ENCODE measurements at regions of chr12 and their contacts with region 1.

Region 1: DNA sequence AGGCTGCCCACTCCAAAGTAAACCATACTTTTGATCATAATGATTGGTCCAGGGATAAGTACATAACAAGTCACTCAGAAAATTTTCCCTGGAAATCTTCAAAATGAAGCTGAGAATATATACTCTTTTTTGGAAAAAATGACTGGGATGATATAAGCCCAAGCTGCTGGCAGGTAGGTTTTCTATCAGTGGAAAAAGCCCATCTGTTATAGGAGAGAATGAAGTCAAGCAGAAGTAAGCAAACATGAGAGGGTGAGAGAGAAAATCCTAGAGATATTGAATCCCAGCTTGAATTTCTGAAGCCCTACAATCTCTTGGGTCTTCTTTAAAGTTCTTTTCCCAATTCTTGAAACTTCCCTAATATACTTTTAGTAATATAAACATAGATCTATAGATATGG is 37.3 kb upstream of the ZDHHC17 start:
- DNase-seq: no peak
- ATAC-seq: no peak
- H3K4me3 Mint-ChIP-seq: no peak overlapping the region
- H3K27ac Mint-ChIP-seq: no peak overlapping the region
- H3K4me1 Mint-ChIP-seq: no peaks in the 10 kb centered on the region
- H3K27me3 Mint-ChIP-seq: no peaks in the 10 kb centered on the region

Region 2: GRCh38 chr12:76738934-76739586 is 12.4 kb after region 1 on chr12:
- CTCF ChIA-PET with region 1: no interaction called
- POLR2A ChIA-PET with region 1: no interaction called
- intact Hi-C with region 1: loop called in 1 of 2 experiments (anchors 1 kb)
- DNase-seq: no peak
- ATAC-seq: no peak
- H3K4me3 Mint-ChIP-seq: no peak overlapping the region
- H3K27ac Mint-ChIP-seq: no peak overlapping the region
- H3K4me1 Mint-ChIP-seq: no peaks in the 10 kb centered on the region
- H3K27me3 Mint-ChIP-seq: peaks cover 3% of the 10 kb centered on the region

Region 3: DNA sequence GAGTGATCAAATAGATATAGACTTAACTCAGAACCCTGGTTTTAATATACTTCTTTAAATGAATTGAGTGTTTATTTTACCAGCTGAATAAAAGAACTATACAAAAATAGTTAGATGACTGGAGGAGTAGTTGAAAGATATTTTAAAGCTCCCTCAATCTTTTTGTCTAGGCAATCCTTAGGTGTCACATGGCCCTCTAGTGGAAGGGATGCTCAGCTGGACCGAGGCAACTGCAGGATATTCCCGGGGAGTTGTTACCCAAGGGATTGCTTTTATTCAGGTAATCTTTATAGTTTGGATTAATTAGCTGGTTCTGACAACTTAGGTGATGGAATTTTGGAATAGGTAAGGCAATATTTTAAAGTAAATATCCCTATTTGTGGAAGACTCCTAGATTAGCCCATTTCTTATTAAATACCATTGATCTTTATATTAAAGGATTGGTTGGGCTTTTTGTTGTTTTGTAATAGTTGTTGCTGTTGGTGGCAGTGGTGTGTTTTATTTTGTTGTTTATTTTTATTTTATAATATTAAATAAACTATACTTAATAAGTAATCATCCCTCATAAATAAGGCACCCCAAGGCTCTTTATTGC is 94.4 kb after region 1 on chr12:
- CTCF ChIA-PET with region 1: no interaction called
- POLR2A ChIA-PET with region 1: no interaction called
- intact Hi-C with region 1: no loop called
- DNase-seq: no peak
- ATAC-seq: no peak
- H3K4me3 Mint-ChIP-seq: no peak overlapping the region
- H3K27ac Mint-ChIP-seq: no peak overlapping the region
- H3K4me1 Mint-ChIP-seq: no peaks in the 10 kb centered on the region
- H3K27me3 Mint-ChIP-seq: no peaks in the 10 kb centered on the region

Measured in activated CD4-positive, alpha-beta T cell treated with anti-CD3 and anti-CD28 coated beads for 36 hours (primary cell).